Tibial artery (tissue), 4 donors: ENCODE measurements at regions of chr7 and their contacts with region 1.

Region 1: GRCh38 chr7:88842201-88842600 is 46.7 kb upstream of the TEX47 start:
- DNase-seq: no peak
- H3K4me3 ChIP-seq: no peak overlapping the region
- H3K27ac ChIP-seq: no peak overlapping the region
- H3K4me1 ChIP-seq: no peaks in the 10 kb centered on the region
- H3K27me3 ChIP-seq: no peaks in the 10 kb centered on the region
- CTCF ChIP-seq: no peak

Region 2: DNA sequence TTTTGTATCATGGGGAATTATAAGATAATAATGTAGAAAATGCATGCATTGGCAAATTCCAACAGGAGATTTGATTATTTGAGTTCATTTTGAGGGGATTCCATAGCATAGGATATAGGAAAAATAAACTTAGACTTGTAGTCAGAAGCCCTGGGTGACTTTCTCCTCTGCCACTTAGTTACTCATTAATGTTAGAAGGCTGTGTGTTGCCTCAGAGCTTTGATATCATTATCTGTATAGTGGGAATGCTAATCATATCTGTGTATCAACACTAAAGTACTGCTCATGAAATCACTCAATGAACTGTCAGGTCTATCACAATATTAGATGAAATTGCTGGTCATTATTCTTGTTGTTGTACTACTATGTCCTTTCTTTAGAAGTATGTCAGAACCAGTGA is 23.6 kb before region 1 on chr7:
- intact Hi-C with region 1: loop called (anchors 1 kb)
- DNase-seq: no peak
- H3K4me3 ChIP-seq: no peak overlapping the region
- H3K27ac ChIP-seq: no peak overlapping the region
- H3K4me1 ChIP-seq: no peaks in the 10 kb centered on the region
- H3K27me3 ChIP-seq: no peaks in the 10 kb centered on the region
- CTCF ChIP-seq: no peak